ENCODE measurements at regions of chr16 and their contacts with region 1.

Region 1: DNA sequence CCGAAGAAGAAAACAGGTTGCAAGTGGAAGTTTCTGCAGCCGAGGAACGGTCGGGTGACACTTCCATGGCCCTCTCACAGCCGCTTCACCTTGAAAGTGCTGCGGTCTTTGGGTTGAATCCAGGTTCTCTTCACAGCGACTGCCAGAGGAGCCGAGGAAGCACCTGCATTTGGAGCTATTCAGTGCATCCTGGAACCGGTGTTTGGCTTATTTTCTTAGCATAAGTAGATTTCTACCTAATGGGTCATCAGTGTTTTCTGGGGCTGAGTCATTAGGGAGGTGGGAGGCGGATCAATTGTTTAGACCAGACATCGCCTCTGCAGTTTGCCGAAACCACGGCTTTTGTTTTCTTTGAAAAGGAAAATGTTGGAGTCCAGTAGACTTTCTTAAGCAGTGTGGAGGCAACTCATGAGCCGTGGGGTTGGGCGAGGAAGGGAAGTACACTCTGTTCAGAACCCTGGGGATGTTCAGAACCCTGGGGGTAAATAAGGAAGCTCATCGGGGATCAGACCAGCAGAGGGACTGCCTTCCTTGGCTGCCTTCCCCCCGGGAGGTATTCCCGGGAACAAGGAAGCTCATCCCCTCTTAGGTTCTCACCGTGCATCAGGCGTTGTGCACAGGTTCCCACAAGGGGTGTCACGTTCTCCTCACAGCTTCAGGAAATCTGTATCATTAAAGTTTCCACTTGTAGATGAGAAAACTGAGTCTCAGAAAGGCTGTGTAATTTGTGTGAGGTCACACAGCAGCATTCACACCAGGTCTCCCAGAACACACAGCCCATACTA is 361.5 kb downstream of the SNX29 start:
- DNase-seq: no peak
- H3K4me3 ChIP-seq: no peak overlapping the region
- H3K27ac ChIP-seq: no peak overlapping the region
- H3K4me1 ChIP-seq: no peaks in the 10 kb centered on the region
- H3K27me3 ChIP-seq: no peaks in the 10 kb centered on the region
- CTCF ChIP-seq: no peak
- POLR2A ChIP-seq: no peak

Region 2: DNA sequence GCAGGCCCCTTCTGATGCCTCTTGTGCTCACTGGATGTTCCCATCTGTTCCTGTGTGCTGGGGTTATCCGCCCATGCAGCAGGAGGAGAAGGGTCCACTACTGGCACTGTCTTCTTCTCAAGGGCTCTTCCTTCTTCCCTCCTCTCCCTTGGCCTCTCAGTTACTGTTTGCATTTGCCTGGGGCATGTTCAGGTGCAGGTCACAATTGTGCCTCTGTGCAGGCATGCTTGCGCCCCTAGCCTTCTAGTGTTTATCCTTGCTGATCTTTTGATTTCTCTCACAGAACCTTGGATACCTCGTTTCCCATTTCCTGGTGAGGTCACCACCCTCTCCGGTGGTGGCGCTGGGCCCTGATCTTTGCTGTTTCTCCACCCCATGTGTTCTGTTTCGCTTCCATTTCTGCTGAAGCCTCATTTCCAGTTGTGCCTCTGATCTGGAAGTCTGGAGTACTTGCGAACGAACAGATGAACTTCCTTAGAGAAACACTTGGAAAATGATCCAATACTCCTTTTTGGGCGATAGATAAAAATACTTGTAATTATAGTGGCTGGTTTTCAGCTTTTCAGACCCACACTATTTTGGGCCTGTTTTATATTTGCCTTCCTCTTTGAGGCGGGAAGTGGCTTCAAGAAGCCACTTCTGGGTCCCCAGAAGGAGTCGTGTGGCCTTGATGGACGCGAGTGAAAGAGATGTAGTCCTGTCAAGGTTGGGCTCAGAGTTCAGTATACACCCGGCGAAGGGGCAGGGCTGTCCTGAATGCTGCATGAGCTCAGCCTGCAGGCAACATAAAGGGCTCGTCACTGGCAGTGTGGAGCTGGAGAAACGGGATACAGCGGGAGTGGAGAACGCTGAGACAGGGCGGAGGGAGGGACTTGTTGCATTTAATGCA is 48.6 kb before region 1 on chr16:
- intact Hi-C with region 1: no loop called
- DNase-seq: no peak
- H3K4me3 ChIP-seq: no peak overlapping the region
- H3K27ac ChIP-seq: no peak overlapping the region
- H3K4me1 ChIP-seq: no peaks in the 10 kb centered on the region
- H3K27me3 ChIP-seq: no peaks in the 10 kb centered on the region
- CTCF ChIP-seq: no peak
- POLR2A ChIP-seq: no peak

Region 3: GRCh38 chr16:12303653-12304052 is 34.4 kb before region 1 on chr16:
- intact Hi-C with region 1: loop called (anchors 2 kb)
- DNase-seq: no peak
- H3K4me3 ChIP-seq: no peak overlapping the region
- H3K27ac ChIP-seq: no peak overlapping the region
- H3K4me1 ChIP-seq: no peaks in the 10 kb centered on the region
- H3K27me3 ChIP-seq: no peaks in the 10 kb centered on the region
- CTCF ChIP-seq: no peak
- POLR2A ChIP-seq: no peak